Activated CD4-positive, alpha-beta memory T cell treated with anti-CD3 and anti-CD28 coated beads, Interleukin-2, amount 10 ng/mL, durations not matched to agents 7 days and 5 days (primary cell): ENCODE measurements at regions of chr2 and their contacts with region 1.

Region 1: DNA sequence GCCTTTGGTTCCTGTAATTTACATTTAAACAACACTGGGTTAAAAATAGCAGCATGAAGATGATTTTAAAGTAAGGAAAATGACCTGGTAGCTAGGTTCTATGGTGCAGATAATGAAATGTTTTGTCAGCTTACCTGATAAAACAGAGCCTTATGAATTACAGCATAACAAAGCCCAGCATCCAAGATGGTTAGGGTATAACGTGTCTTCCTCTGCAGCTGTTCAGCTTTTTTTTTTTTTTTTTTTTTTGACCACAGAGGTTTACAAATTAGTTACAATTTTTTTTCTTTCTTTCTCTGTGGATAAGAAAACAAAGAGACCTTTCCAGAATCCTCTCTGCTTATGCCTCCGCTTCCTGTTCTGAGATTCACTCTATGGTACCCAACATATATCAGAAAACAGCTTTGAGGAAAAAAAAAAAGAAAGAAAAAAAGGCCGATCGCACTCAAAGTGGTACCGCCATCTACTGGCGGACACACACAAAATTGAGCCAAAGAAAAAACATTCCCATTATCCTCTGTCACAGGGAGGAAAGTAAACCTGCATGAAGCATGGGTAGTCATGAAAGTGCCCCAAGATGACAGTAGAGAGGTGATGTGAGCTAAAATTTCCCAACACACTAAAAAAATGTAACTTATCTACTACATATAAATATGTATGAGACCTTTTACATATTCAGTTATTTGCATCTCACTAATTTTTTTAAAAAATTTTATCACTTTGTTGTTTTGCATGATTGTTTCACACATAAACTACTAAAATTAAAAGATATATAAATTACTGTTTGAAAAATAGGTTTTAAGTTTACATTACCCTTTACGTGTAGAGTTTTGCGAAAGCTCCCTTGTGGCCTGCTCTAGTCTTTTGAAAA is at the start of gene SCN3A:
- DNase-seq: no peak
- H3K4me3 Mint-ChIP-seq: no peak within 1 kb of the TSS
- H3K27ac Mint-ChIP-seq: no peak within 1 kb of the TSS
- H3K4me1 Mint-ChIP-seq: peaks cover 3% of the 10 kb centered on the region
- H3K27me3 Mint-ChIP-seq: no peaks in the 10 kb centered on the region
- total RNA-seq, gene SCN3A: not detected

Region 2: GRCh38 chr2:164992818-164993217 is 211.1 kb before region 1 on chr2:
- CTCF ChIA-PET with region 1: interaction called, 18 read pairs
- POLR2A ChIA-PET with region 1: no interaction called
- DNase-seq: peak; percentile 37
- H3K4me3 Mint-ChIP-seq: no peak overlapping the region
- H3K27ac Mint-ChIP-seq: no peak overlapping the region
- H3K4me1 Mint-ChIP-seq: peaks cover 27% of the 10 kb centered on the region
- H3K27me3 Mint-ChIP-seq: no peaks in the 10 kb centered on the region

Region 3: GRCh38 chr2:165016772-165017411 is 187.0 kb before region 1 on chr2:
- CTCF ChIA-PET with region 1: interaction called, 19 read pairs
- POLR2A ChIA-PET with region 1: no interaction called
- DNase-seq: no peak
- H3K4me3 Mint-ChIP-seq: no peak overlapping the region
- H3K27ac Mint-ChIP-seq: no peak overlapping the region
- H3K4me1 Mint-ChIP-seq: no peaks in the 10 kb centered on the region
- H3K27me3 Mint-ChIP-seq: no peaks in the 10 kb centered on the region